ENCODE measurements at regions of chr11 and their contacts with region 1.

Region 1: GRCh38 chr11:122796128-122796717 is 42.1 kb upstream of the CRTAM start:
- DNase-seq: peak; percentile 51 to 68 (median 64)
- H3K4me3 ChIP-seq: no peak overlapping the region
- H3K27ac ChIP-seq: no peak overlapping the region
- H3K4me1 ChIP-seq: no peaks in the 10 kb centered on the region
- H3K27me3 ChIP-seq: no peaks in the 10 kb centered on the region

Region 2: GRCh38 chr11:122733318-122733717 is 62.9 kb before region 1 on chr11:
- CTCF ChIA-PET with region 1: no interaction called
- POLR2A ChIA-PET with region 1: no interaction called
- DNase-seq: no peak
- H3K4me3 ChIP-seq: no peak overlapping the region
- H3K27ac ChIP-seq: no peak overlapping the region
- H3K4me1 ChIP-seq: peaks cover 11 to 45% (median 22%) of the 10 kb centered on the region in 4 experiments
- H3K27me3 ChIP-seq: no peaks in the 10 kb centered on the region

Region 3: GRCh38 chr11:122808478-122808869 is 12.3 kb after region 1 on chr11:
- CTCF ChIA-PET with region 1: interaction called, 27 read pairs
- POLR2A ChIA-PET with region 1: no interaction called
- DNase-seq: peak in 2 of 3 donors; percentile 44 to 49
- H3K4me3 ChIP-seq: peak overlapping the region in 3 of 7 experiments; percentile 12 to 55 (median 47)
- H3K27ac ChIP-seq: peak overlapping the region; percentile 4 to 58
- H3K4me1 ChIP-seq: peaks cover 10 to 40% (median 21%) of the 10 kb centered on the region in 4 experiments
- H3K27me3 ChIP-seq: no peaks in the 10 kb centered on the region

Region 4: DNA sequence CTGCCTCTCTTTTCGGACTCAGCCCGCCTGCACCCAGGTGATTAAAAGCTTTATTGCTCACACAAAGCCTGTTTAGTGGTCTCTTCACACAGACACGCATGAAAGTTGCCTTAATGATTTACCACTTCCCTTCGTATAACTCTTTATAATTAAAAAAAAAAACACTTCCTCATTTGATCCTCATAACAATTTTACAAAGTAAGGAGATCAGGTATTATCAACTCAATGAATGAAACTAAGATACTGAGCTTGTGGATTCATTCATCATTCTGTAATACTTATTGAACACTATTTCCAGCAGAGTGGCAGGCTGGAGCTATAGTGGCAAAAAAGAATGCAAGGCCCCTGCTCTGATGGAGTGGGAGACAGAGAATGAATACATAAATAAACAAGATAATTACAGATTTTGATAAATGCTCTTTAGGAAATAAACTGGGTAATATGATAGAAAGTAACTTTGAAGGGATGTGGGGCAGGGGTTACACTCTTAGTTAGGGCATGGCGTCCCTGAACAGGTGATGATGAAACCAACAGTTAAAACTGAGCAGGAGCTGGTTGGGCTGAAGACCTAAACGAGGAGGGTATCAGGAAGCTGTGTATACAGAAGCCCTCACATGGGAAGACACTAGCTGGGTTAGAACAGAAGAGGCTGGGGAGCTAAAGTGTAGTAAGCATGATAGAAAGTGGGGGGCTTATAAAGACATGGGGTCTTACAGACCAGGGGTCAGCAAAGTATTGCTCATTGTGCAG is 36.7 kb after region 1 on chr11:
- CTCF ChIA-PET with region 1: interaction called, 14 read pairs
- POLR2A ChIA-PET with region 1: no interaction called
- DNase-seq: peak; percentile 61 to 92 (median 86)
- H3K4me3 ChIP-seq: peak overlapping the region in 1 of 7 experiments; percentile 10
- H3K27ac ChIP-seq: no peak overlapping the region
- H3K4me1 ChIP-seq: peaks cover 3 to 31% (median 20%) of the 10 kb centered on the region in 4 experiments
- H3K27me3 ChIP-seq: no peaks in the 10 kb centered on the region

Region 5: GRCh38 chr11:122853971-122854446 is 57.8 kb after region 1 on chr11:
- CTCF ChIA-PET with region 1: interaction called, 201 read pairs
- POLR2A ChIA-PET with region 1: no interaction called
- DNase-seq: peak; percentile 71 to 78 (median 74)
- H3K4me3 ChIP-seq: no peak overlapping the region
- H3K27ac ChIP-seq: no peak overlapping the region
- H3K4me1 ChIP-seq: peaks cover 7 to 36% (median 21%) of the 10 kb centered on the region in 4 experiments
- H3K27me3 ChIP-seq: no peaks in the 10 kb centered on the region

Region 6: GRCh38 chr11:123054301-123055065 is 258.3 kb after region 1 on chr11:
- CTCF ChIA-PET with region 1: interaction called, 17 read pairs
- POLR2A ChIA-PET with region 1: no interaction called
- DNase-seq: peak; percentile 67 to 82 (median 80)
- H3K4me3 ChIP-seq: no peak overlapping the region
- H3K27ac ChIP-seq: no peak overlapping the region
- H3K4me1 ChIP-seq: peaks cover 2 to 19% (median 14%) of the 10 kb centered on the region in 4 experiments
- H3K27me3 ChIP-seq: no peaks in the 10 kb centered on the region